B cell (primary cell): ENCODE measurements at regions of chr19 and their contacts with region 1.

Region 1: GRCh38 chr19:44207126-44207803 is 5.1 kb upstream of the ZNF227 start:
- DNase-seq: peak; percentile 91
- ATAC-seq: peak; percentile 91
- H3K4me3 ChIP-seq: peak overlapping the region; percentile 70 to 93 (median 88)
- H3K4me3 Mint-ChIP-seq: peak overlapping the region; percentile 88
- H3K27ac ChIP-seq: peak overlapping the region; percentile 71 to 86
- H3K27ac Mint-ChIP-seq: peak overlapping the region; percentile 92
- H3K4me1 ChIP-seq: peaks cover 4 to 7% of the 10 kb centered on the region in 2 donors
- H3K4me1 Mint-ChIP-seq: peaks cover 11% of the 10 kb centered on the region
- H3K27me3 ChIP-seq: no peaks in the 10 kb centered on the region
- H3K27me3 Mint-ChIP-seq: peaks cover 13% of the 10 kb centered on the region
- CTCF ChIP-seq: no peak

Region 2: DNA sequence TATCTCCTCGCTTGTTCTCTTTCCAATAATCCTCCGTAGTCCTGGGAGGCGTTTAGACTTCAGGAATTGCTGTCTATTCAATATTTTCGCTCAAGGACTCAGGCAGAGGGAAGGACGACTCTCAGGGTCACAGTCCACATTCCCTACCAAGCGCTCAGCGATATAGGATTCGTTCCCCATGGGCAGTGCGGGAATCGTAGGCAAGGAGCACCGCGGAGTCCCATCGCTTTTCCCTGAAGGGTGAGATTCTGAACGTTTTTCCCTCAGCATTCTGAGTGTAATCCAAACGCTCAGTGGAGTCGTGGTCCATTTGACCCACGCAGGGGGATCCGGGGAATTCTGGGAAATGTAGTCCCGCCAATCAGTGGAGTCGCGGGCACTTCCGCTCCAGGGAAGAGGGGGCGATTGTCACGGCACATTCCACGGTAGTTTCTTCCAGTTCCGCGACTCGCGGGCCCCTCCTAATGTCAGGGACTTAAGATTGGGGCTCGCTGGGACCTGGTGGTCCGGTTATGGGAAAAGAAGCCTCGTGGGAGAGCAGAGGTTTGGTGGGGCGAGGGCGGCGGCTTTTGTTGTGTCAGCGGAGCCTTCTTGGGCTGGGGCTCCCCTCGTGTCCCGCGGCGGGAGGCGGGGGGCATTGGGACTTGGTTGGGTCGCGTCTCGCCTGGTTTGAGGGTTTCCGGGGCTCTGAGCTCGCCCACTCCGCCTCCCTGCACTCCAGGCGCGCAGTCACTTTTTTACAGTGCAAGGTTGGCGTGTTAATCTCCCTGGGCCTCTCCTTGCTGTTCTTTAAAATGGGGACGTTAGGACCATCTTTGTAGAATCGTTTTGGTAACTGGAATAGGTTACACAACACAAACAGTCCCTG is 65.8 kb before region 1 on chr19 and contains the start of gene ZNF234:
- CTCF ChIA-PET with region 1: no interaction called
- POLR2A ChIA-PET with region 1: no interaction called
- intact Hi-C with region 1: loop called (anchors 1 kb)
- DNase-seq: peak; percentile 81
- ATAC-seq: peak; percentile 95
- H3K4me3 ChIP-seq: peak within 1 kb of the TSS; percentile 64 to 93 (median 81)
- H3K4me3 Mint-ChIP-seq: peak within 1 kb of the TSS; percentile 93
- H3K27ac ChIP-seq: peak within 1 kb of the TSS; percentile 61 to 77
- H3K27ac Mint-ChIP-seq: peak within 1 kb of the TSS; percentile 87
- H3K4me1 ChIP-seq: peaks cover 13 to 15% of the 10 kb centered on the region in 2 donors
- H3K4me1 Mint-ChIP-seq: peaks cover 27% of the 10 kb centered on the region
- H3K27me3 ChIP-seq: no peaks in the 10 kb centered on the region
- H3K27me3 Mint-ChIP-seq: no peaks in the 10 kb centered on the region
- CTCF ChIP-seq: no peak
- total RNA-seq, gene ZNF234: 24.1 and 27.5 TPM in 2 replicates

Region 3: DNA sequence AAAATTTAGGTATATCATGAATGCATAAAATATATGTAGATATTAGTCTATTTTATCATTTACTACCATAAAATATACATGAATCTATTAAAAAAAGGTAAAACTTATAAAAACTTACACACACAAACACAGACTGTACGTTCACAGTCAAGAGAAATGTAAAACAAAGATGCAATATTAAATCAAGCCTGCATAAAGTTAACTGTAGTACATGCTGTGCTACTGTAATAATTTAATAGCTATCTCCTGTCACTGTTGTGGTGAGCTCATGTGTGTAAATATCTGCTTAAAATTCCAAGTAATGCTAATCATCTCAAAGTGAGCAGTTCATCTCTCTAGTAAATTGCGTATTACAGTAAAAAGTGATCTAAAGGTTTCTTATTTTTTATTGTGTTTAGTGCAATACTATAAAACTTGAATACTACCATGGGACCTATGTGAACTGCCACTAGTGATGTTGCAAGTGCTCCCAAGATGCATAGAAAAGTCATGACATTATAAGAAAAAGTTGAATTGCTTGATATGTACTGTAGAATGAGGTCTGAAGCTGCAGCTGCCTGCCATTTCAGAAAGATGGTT is 51.7 kb after region 1 on chr19:
- CTCF ChIA-PET with region 1: interaction called, 4 read pairs
- POLR2A ChIA-PET with region 1: no interaction called
- intact Hi-C with region 1: loop called (anchors 1 kb)
- DNase-seq: no peak
- ATAC-seq: no peak
- H3K4me3 ChIP-seq: no peak overlapping the region
- H3K4me3 Mint-ChIP-seq: peak overlapping the region; percentile 55
- H3K27ac ChIP-seq: no peak overlapping the region
- H3K27ac Mint-ChIP-seq: no peak overlapping the region
- H3K4me1 ChIP-seq: peaks cover 5 to 13% of the 10 kb centered on the region in 2 donors
- H3K4me1 Mint-ChIP-seq: peaks cover 12% of the 10 kb centered on the region
- H3K27me3 ChIP-seq: no peaks in the 10 kb centered on the region
- H3K27me3 Mint-ChIP-seq: no peaks in the 10 kb centered on the region
- CTCF ChIP-seq: no peak

Region 4: DNA sequence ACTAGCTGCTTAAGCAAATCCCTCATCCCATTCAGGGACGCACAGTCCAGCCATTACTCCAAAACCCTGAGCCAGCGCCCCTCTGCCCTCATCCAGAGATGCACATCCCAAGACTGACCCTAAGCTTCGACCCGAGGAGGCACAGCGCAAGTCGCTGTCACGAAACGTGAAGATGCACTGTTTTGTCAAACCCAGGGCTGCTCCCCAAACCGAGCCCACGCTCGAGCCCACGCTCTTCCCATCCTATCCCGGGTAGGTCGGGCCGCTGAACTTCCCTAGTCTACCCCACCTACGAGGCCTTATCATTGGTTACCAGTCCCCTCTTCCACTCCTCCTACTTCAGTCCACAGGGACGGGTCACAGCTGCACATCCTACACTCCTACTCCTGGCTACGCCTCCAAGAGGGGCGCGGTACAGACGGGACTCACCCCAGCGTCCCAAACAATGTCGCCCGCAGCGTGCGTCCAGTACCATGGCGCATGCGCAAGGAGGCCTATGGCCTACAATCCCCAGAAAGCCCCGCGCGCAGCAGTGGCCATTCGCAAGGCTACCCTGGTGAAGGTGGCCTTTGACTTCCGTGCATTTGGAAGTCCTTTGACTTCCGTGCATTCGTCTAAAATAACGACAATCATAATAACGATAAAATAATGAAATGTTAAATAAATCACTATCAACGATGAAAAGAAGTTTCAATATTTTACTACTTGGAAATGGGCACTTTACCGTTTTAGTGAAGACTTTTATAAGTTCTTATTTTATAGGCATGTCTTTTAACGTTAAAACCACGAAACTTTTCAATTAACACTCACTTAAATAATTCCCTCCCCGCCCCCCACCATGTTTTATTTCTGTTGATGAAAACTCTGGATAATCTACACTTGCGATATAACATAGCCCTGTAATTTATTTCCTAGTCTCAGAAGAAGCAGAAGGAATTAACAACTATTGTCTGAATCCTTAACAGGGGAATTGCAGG is 194.2 kb after region 1 on chr19 and contains the start of gene ZNF285:
- CTCF ChIA-PET with region 1: no interaction called
- POLR2A ChIA-PET with region 1: no interaction called
- intact Hi-C with region 1: loop called (anchors 1 kb)
- DNase-seq: peak; percentile 89
- ATAC-seq: peak; percentile 99
- H3K4me3 ChIP-seq: peak within 1 kb of the TSS; percentile 59 to 77 (median 73)
- H3K4me3 Mint-ChIP-seq: peak within 1 kb of the TSS; percentile 96
- H3K27ac ChIP-seq: no peak within 1 kb of the TSS
- H3K27ac Mint-ChIP-seq: peak within 1 kb of the TSS; percentile 72
- H3K4me1 ChIP-seq: peaks cover 0 to 13% of the 10 kb centered on the region in 2 donors
- H3K4me1 Mint-ChIP-seq: peaks cover 10% of the 10 kb centered on the region
- H3K27me3 ChIP-seq: peaks cover 0 to 4% (median 1%) of the 10 kb centered on the region in 4 experiments
- H3K27me3 Mint-ChIP-seq: peaks cover 5% of the 10 kb centered on the region
- CTCF ChIP-seq: no peak
- total RNA-seq, gene ZNF285: 7.6 and 7.9 TPM in 2 replicates

Region 5: GRCh38 chr19:44607049-44607448 is 399.8 kb after region 1 on chr19:
- CTCF ChIA-PET with region 1: no interaction called
- POLR2A ChIA-PET with region 1: no interaction called
- intact Hi-C with region 1: no loop called
- DNase-seq: peak; percentile 20
- ATAC-seq: no peak
- H3K4me3 ChIP-seq: no peak overlapping the region
- H3K4me3 Mint-ChIP-seq: no peak overlapping the region
- H3K27ac ChIP-seq: no peak overlapping the region
- H3K27ac Mint-ChIP-seq: no peak overlapping the region
- H3K4me1 ChIP-seq: peaks cover 5% of the 10 kb centered on the region in 2 donors
- H3K4me1 Mint-ChIP-seq: peaks cover 5% of the 10 kb centered on the region
- H3K27me3 ChIP-seq: peaks cover 0 to 6% (median 0%) of the 10 kb centered on the region in 4 experiments
- H3K27me3 Mint-ChIP-seq: peaks cover 10% of the 10 kb centered on the region
- CTCF ChIP-seq: no peak